CD8-positive, alpha-beta memory T cell (primary cell): ENCODE measurements at regions of chr3 and their contacts with region 1.

Region 1: DNA sequence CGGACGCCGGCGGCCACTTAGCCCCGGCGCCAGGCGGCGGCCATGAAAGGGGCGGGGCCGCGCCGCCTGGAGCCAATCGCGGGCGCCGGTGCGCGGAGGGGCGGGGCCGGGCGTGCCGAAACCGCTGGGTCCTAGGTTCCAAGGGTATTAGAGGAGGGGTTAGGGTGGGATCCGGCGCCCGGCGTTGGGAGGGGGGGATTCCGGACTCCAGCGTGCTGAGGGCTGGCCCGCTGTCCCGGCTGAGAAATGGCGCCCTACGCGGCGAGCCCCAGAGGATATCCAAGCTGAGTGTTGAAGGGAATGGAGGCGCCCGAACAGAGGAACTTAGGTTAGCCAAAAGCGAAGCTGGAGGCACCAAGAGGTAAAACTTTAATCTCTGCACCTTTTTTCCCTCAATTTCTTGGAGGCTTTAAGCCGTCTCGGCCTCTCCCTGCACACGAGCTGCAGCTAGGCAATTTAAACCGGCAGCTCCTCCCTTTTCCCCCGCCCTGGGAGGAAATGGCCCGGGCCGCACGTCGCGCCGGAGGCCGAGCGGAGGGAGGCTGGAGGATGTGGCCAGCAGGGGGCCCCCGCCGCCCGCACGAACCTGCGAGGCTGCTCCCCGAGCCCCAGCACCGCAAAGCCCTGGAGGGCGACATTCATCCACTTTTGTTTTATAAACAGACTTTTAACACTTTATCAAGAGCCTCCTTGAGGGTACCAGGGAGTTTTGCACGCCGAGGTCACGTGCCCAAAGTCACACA is at the start of gene XXYLT1:
- DNase-seq: peak; percentile 82 to 91 (median 87)
- H3K4me3 ChIP-seq: peak within 1 kb of the TSS; percentile 85
- H3K4me3 Mint-ChIP-seq: peak within 1 kb of the TSS; percentile 86 to 96 (median 88)
- H3K27ac ChIP-seq: peak within 1 kb of the TSS; percentile 68
- H3K27ac Mint-ChIP-seq: peak within 1 kb of the TSS; percentile 58 to 95 (median 83)
- H3K4me1 ChIP-seq: peaks cover 18% of the 10 kb centered on the region
- H3K4me1 Mint-ChIP-seq: peaks cover 19 to 25% (median 25%) of the 10 kb centered on the region in 3 donors
- H3K27me3 ChIP-seq: no peaks in the 10 kb centered on the region
- H3K27me3 Mint-ChIP-seq: no peaks in the 10 kb centered on the region
- total RNA-seq, gene XXYLT1: 8.3 to 10.5 TPM

Region 2: DNA sequence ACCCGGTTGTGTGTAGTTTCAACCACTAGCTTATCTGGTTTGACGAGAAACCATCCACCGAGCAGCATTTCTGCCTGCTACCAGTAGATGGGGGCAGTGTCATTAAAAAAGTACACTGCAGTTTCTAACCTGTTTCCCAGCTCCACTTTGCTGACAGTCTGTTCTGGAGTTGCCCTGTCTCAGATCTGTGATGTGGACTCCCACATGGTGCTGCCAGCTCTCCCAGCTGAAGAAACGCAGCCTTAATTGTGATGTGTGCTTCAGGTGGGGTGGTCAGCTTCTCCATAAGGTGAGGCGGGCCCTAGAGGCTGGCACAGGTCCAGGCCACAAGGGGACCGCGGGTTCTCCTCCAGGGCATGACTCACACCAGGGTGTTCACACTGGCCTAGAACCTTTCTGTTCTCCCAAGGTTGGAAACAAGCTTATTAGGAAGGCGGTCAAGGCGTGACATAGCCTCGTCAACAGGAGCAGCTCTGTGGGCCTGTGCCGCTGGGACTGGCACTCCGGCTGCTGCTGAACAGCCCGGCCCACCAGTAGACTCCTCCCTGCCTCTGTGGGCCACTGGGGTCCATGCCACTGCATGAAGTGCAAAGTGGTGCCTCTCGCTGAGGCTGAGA is 588.5 kb before region 1 on chr3:
- CTCF ChIA-PET with region 1: interaction called, 30 read pairs
- POLR2A ChIA-PET with region 1: interaction called, 5 read pairs
- DNase-seq: peak; percentile 39 to 75 (median 63)
- H3K4me3 ChIP-seq: no peak overlapping the region
- H3K4me3 Mint-ChIP-seq: peak overlapping the region in 3 of 7 donors; percentile 2 to 70 (median 28)
- H3K27ac ChIP-seq: no peak overlapping the region
- H3K27ac Mint-ChIP-seq: peak overlapping the region in 4 of 8 donors; percentile 12 to 63 (median 46)
- H3K4me1 ChIP-seq: peaks cover 27% of the 10 kb centered on the region
- H3K4me1 Mint-ChIP-seq: peaks cover 26 to 38% (median 29%) of the 10 kb centered on the region in 3 donors
- H3K27me3 ChIP-seq: no peaks in the 10 kb centered on the region
- H3K27me3 Mint-ChIP-seq: peaks cover 2 to 4% of the 10 kb centered on the region in 2 donors

Region 3: DNA sequence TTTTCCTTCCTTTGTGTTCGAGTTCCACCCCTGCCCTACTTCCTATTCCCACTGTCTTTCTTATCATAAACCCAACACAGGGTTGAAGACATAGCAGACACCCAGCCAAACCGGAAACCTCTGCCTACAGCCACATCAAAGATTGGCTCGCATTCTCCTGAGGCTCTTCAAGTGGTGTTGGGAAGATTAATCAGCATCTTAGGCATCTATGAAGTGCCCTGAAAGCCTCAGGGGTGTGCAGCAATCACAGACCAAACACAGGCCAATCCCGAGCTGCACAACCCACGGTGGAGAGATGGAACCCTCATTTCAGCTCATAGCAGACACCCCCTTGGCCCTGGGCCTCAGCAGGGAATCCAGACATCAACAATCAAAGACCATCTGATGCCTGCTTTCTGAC is 256.3 kb before region 1 on chr3:
- CTCF ChIA-PET with region 1: no interaction called
- POLR2A ChIA-PET with region 1: no interaction called
- DNase-seq: no peak
- H3K4me3 ChIP-seq: no peak overlapping the region
- H3K4me3 Mint-ChIP-seq: no peak overlapping the region
- H3K27ac ChIP-seq: no peak overlapping the region
- H3K27ac Mint-ChIP-seq: peak overlapping the region in 1 of 8 donors; percentile 20
- H3K4me1 ChIP-seq: no peaks in the 10 kb centered on the region
- H3K4me1 Mint-ChIP-seq: peaks cover 5 to 6% (median 6%) of the 10 kb centered on the region in 3 donors
- H3K27me3 ChIP-seq: no peaks in the 10 kb centered on the region
- H3K27me3 Mint-ChIP-seq: peaks cover 8 to 21% of the 10 kb centered on the region in 2 donors

Region 4: DNA sequence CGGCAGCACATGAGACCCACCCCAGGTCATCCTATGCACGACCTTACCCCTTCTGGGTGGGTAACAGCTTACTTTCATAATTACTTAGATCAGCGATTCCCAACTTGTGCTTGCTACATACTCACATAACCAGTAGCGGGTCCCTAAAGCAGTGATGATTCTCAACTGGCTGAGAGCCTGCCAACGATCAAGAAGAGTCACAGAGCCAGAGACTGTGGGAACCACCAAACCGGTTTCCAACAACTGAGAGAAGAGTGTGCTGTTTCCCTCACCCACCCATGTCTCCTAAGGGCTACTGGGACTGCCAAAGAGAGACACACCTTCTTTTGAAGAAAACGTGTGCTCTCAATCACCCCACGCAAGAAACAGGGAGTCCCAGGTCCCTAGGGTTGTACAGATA is 11.7 kb after region 1 on chr3:
- CTCF ChIA-PET with region 1: interaction called, 20 read pairs
- POLR2A ChIA-PET with region 1: interaction called, 3 read pairs
- DNase-seq: no peak
- H3K4me3 ChIP-seq: no peak overlapping the region
- H3K4me3 Mint-ChIP-seq: no peak overlapping the region
- H3K27ac ChIP-seq: no peak overlapping the region
- H3K27ac Mint-ChIP-seq: peak overlapping the region in 2 of 8 donors; percentile 47 to 51
- H3K4me1 ChIP-seq: no peaks in the 10 kb centered on the region
- H3K4me1 Mint-ChIP-seq: peaks cover 0 to 5% (median 4%) of the 10 kb centered on the region in 3 donors
- H3K27me3 ChIP-seq: no peaks in the 10 kb centered on the region
- H3K27me3 Mint-ChIP-seq: no peaks in the 10 kb centered on the region

Region 5: DNA sequence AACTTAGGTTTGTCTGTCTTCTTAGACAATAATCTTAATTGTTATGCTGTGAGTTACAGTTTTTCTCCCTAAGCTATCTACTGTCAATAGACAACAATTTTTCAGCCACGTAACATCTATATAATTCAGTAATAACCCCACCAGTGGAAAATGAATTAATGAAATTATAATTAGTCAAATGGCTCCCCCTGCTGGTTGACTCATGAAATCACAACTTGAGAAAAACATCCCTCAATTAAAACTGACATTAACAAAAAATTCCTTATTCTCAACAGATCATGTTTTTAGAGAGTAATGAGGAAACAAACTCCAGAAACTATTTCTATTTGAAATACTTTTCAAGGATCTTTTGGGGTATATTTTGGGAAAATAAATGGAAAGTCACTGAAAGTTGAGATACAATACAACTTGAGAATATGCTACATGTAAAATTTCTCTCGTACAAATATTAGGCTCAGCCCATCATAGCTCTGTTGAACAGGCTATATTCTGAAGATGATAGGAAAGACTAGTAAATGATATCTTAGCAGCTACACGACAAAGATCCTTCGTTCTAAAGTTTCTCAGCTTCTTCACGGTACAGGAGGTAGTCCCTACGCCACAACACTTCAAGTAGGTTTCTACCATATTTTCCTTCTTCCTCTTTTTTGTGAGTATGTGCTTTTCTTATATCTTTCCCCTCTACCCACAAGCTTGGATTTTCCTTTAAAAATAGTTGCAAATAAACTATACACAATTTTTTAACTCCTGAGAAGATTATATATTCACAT is 251.2 kb after region 1 on chr3:
- CTCF ChIA-PET with region 1: interaction called, 69 read pairs
- POLR2A ChIA-PET with region 1: interaction called, 3 read pairs
- DNase-seq: peak in 2 of 5 donors; percentile 38 to 48
- H3K4me3 ChIP-seq: no peak overlapping the region
- H3K4me3 Mint-ChIP-seq: no peak overlapping the region
- H3K27ac ChIP-seq: no peak overlapping the region
- H3K27ac Mint-ChIP-seq: peak overlapping the region in 7 of 8 donors; percentile 31 to 68 (median 56)
- H3K4me1 ChIP-seq: peaks cover 46% of the 10 kb centered on the region
- H3K4me1 Mint-ChIP-seq: peaks cover 43 to 66% (median 57%) of the 10 kb centered on the region in 3 donors
- H3K27me3 ChIP-seq: no peaks in the 10 kb centered on the region
- H3K27me3 Mint-ChIP-seq: no peaks in the 10 kb centered on the region

Region 6: DNA sequence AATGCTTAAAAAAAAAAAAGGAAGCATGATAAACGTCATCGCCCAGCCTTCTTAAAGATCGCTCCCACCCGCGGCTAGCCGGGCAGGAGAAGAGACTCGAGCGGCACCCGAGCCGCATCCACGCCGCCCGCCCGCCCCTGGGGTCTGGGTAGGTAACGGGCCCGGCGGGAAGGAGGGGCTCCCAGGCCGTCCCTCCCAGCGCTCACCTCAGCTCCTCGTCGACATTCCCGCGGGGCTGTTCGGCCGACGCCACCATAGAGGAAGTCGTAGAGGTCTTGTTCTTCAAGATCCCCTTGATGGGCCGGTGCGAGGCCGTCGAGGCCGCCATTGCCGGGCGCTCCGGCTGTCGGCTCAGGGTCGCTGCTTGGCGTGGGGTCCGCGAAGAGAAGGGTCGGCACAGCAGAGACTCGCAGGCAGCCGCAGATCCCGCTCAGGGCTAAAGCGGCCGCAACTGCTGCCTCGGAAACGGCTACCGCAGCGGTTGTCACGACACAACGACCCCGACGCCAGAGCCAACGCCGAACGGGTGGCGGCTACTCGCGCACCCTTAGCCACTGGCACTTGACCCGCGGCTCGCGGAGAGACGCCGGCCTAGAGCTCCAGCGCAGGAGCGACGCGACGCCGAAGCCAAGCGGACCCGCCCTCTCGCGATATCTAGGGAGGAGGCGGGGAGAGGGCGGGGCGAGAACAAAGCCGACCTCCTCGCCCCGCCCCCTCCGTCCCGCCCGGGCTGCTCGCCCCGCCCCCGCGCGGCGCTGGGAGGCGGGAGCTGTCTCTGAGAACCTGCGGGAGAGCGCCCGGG is 271.6 kb after region 1 on chr3 and contains the start of gene PPP1R2:
- CTCF ChIA-PET with region 1: interaction called, 24 read pairs
- POLR2A ChIA-PET with region 1: interaction called, 9 read pairs
- DNase-seq: peak; percentile 89 to 93 (median 92)
- H3K4me3 ChIP-seq: peak within 1 kb of the TSS; percentile 85
- H3K4me3 Mint-ChIP-seq: peak within 1 kb of the TSS; percentile 85 to 98 (median 95)
- H3K27ac ChIP-seq: peak within 1 kb of the TSS; percentile 88
- H3K27ac Mint-ChIP-seq: peak within 1 kb of the TSS; percentile 84 to 99 (median 95)
- H3K4me1 ChIP-seq: peaks cover 71% of the 10 kb centered on the region
- H3K4me1 Mint-ChIP-seq: peaks cover 75 to 82% (median 81%) of the 10 kb centered on the region in 3 donors
- H3K27me3 ChIP-seq: no peaks in the 10 kb centered on the region
- H3K27me3 Mint-ChIP-seq: no peaks in the 10 kb centered on the region
- total RNA-seq, gene PPP1R2: 106 to 109 TPM